MCF 10A (cell line): ENCODE measurements at regions of chr20 and their contacts with region 1.

Region 1: GRCh38 chr20:22974353-22974752 is 60.8 kb upstream of the SSTR4 start:
- DNase-seq: peak; percentile 53
- H3K4me3 Mint-ChIP-seq: no peak overlapping the region
- H3K27ac Mint-ChIP-seq: no peak overlapping the region
- H3K4me1 Mint-ChIP-seq: no peaks in the 10 kb centered on the region
- H3K27me3 Mint-ChIP-seq: no peaks in the 10 kb centered on the region
- CTCF ChIP-seq: peak; percentile 61

Region 2: DNA sequence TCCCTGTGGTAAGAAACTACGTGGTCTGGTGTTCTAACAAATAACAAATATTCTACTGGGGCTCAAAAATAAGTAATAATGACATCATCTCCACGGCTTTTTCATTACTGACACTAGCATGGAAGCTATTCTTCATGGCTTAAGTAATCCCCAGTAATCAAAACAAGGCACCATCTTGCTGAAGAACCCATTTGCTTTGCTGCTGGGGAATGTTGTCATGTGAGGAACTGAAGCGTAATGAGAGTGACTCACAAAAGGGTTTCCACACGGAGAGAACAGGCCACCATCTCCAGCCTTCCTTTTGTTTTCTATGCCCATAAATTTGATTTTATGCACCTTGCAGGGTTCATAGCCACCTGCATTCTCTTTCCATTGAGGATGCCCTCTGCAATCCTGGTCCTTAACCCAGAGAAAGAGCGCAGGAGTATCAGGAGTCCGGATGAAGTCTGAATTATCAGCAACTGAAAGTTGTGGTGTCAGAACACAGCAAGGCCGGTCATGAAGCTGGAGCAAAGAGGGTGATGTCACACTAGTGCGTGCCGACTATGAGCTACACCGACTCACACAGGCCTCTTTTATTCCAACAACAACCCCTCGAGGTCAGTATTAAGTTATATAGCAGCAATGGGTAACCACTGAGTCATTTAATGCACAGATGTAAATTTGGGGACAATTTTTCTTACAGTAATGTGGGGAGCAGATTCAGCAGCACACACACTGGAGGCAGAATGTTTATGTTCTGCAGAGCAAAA is 112.9 kb before region 1 on chr20:
- CTCF ChIA-PET with region 1: no interaction called
- POLR2A ChIA-PET with region 1: no interaction called
- intact Hi-C with region 1: no loop called
- DNase-seq: no peak
- H3K4me3 Mint-ChIP-seq: no peak overlapping the region
- H3K27ac Mint-ChIP-seq: no peak overlapping the region
- H3K4me1 Mint-ChIP-seq: peaks cover 9% of the 10 kb centered on the region
- H3K27me3 Mint-ChIP-seq: no peaks in the 10 kb centered on the region
- CTCF ChIP-seq: no peak

Region 3: GRCh38 chr20:22962557-22963438 is 11.6 kb before region 1 on chr20:
- CTCF ChIA-PET with region 1: interaction called, 18 read pairs
- POLR2A ChIA-PET with region 1: interaction called, 5 read pairs
- intact Hi-C with region 1: no loop called
- DNase-seq: peak; percentile 24
- H3K4me3 Mint-ChIP-seq: no peak overlapping the region
- H3K27ac Mint-ChIP-seq: no peak overlapping the region
- H3K4me1 Mint-ChIP-seq: peaks cover 14% of the 10 kb centered on the region
- H3K27me3 Mint-ChIP-seq: no peaks in the 10 kb centered on the region
- CTCF ChIP-seq: no peak

Region 4: DNA sequence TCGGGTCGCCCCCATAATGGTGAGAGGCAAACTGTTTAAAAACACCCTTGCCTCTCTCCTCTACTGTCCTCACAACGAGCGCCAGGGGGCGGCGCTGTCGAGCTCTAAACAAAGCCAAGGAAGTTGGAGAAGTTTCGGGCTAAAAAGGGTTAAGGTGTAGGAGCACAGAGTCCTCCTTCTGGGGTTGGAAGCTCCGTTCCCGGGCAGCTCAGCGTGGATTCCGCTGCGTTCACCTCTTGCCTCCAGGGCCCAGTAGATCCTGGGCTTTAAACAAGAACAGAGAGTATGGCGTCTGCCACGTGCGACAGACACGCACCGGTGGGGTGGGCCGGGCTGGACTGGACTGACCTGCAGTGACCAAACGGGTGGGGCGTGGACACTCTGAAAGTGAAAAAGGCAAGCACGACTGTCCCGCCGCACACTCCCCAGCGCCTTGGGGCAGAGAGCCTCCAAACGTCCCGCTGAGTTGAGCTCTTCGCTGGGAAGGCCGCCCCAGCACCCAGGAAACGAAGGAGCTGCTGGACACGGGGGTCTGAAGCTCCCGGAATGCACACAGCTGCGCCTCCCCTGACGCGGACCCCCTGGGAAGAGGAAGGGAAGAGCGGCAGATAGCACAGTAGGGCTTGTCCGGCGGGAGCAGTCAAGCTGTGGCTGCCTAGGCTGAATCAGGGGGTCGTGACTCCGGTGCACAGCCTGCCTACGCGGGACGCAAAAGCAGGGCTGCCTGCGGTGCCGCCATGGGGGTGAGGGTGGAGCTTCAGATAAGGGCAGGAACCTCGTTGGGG is 76.7 kb after region 1 on chr20:
- CTCF ChIA-PET with region 1: interaction called, 3 read pairs
- POLR2A ChIA-PET with region 1: no interaction called
- intact Hi-C with region 1: loop called (anchors 5 kb)
- DNase-seq: peak; percentile 92
- H3K4me3 Mint-ChIP-seq: peak overlapping the region; percentile 74
- H3K27ac Mint-ChIP-seq: peak overlapping the region; percentile 92
- H3K4me1 Mint-ChIP-seq: peaks cover 17% of the 10 kb centered on the region
- H3K27me3 Mint-ChIP-seq: no peaks in the 10 kb centered on the region
- CTCF ChIP-seq: peak; percentile 78